Naive thymus-derived CD4-positive, alpha-beta T cell (primary cell): ENCODE measurements at regions of chr3 and their contacts with region 1.

Region 1: GRCh38 chr3:177359593-177360357 is 162.5 kb upstream of the TBL1XR1 start:
- DNase-seq: peak; percentile 95 to 98 (median 96)
- ATAC-seq: peak; percentile 92
- H3K4me3 ChIP-seq: peak overlapping the region; percentile 75
- H3K4me3 Mint-ChIP-seq: peak overlapping the region; percentile 77 to 98 (median 94)
- H3K27ac ChIP-seq: peak overlapping the region; percentile 90
- H3K27ac Mint-ChIP-seq: peak overlapping the region; percentile 96 to 100 (median 98)
- H3K4me1 ChIP-seq: peaks cover 31 to 34% of the 10 kb centered on the region in 2 donors
- H3K4me1 Mint-ChIP-seq: peaks cover 28 to 63% (median 54%) of the 10 kb centered on the region in 7 donors
- H3K27me3 ChIP-seq: no peaks in the 10 kb centered on the region
- H3K27me3 Mint-ChIP-seq: peaks cover 0 to 2% (median 0%) of the 10 kb centered on the region in 5 donors

Region 2: GRCh38 chr3:176321099-176321498 is 1038.7 kb before region 1 on chr3:
- CTCF ChIA-PET with region 1: no interaction called
- POLR2A ChIA-PET with region 1: no interaction called
- intact Hi-C with region 1: no loop called
- DNase-seq: no peak
- ATAC-seq: no peak
- H3K4me3 ChIP-seq: no peak overlapping the region
- H3K4me3 Mint-ChIP-seq: no peak overlapping the region
- H3K27ac ChIP-seq: no peak overlapping the region
- H3K27ac Mint-ChIP-seq: no peak overlapping the region
- H3K4me1 ChIP-seq: no peaks in the 10 kb centered on the region
- H3K4me1 Mint-ChIP-seq: peaks cover 0 to 2% (median 0%) of the 10 kb centered on the region in 7 donors
- H3K27me3 ChIP-seq: no peaks in the 10 kb centered on the region
- H3K27me3 Mint-ChIP-seq: no peaks in the 10 kb centered on the region

Region 3: DNA sequence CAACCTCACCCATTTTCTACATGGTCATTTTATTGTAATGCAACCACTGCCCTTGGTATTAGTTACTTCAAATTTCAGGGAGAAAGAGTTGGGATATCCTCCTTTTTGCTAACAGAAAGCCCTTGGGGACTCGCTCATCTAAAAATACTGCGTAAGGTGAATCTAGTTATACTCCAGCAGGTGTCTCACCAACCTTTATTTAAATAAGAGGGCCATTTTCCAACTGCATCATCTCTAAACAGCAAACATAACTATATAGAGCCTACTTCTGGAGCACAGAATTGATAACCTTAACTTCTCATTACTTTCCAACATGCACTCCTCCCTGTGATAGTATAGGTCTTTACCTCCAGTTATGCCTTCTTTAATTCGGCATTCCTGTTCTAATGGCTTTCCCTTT is 239.9 kb before region 1 on chr3:
- CTCF ChIA-PET with region 1: interaction called, 3 read pairs
- POLR2A ChIA-PET with region 1: interaction called, 6 read pairs
- intact Hi-C with region 1: loop called in 1 of 2 experiments (anchors 1 kb)
- DNase-seq: peak in 1 of 9 donors; percentile 31
- ATAC-seq: no peak
- H3K4me3 ChIP-seq: no peak overlapping the region
- H3K4me3 Mint-ChIP-seq: peak overlapping the region in 1 of 10 donors; percentile 28
- H3K27ac ChIP-seq: no peak overlapping the region
- H3K27ac Mint-ChIP-seq: peak overlapping the region in 6 of 9 donors; percentile 10 to 52 (median 26)
- H3K4me1 ChIP-seq: peaks cover 5 to 33% of the 10 kb centered on the region in 2 donors
- H3K4me1 Mint-ChIP-seq: peaks cover 46 to 97% (median 91%) of the 10 kb centered on the region in 7 donors
- H3K27me3 ChIP-seq: no peaks in the 10 kb centered on the region
- H3K27me3 Mint-ChIP-seq: no peaks in the 10 kb centered on the region

Region 4: DNA sequence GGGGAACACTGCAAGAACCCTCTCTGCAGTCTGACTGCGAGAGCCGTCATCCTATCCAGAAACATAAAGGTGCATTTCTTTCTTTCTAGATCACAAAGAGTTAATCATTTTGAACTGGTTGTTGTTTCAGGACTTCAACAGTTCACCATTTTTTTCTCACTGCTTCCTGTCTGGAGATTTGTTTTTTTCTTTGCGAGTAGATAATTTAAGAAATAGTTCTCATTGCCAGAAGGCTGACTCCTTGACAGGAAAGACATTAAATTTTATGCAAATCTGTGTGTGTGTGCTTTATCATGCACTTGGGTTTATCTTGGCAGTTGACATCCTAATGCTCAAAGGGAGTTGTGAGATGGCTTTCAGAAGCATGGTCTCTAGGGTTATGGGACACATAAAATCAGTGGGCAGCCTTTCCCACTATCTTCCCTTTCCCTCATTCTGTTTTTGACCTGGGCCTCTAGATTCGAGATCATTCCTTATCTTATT is 39.0 kb before region 1 on chr3:
- CTCF ChIA-PET with region 1: no interaction called
- POLR2A ChIA-PET with region 1: interaction called, 3 read pairs
- intact Hi-C with region 1: loop called (anchors 1 kb)
- DNase-seq: peak in 7 of 9 donors; percentile 18 to 61 (median 52)
- ATAC-seq: no peak
- H3K4me3 ChIP-seq: no peak overlapping the region
- H3K4me3 Mint-ChIP-seq: peak overlapping the region; percentile 4 to 75 (median 60)
- H3K27ac ChIP-seq: no peak overlapping the region
- H3K27ac Mint-ChIP-seq: peak overlapping the region; percentile 11 to 90 (median 74)
- H3K4me1 ChIP-seq: peaks cover 0 to 14% of the 10 kb centered on the region in 2 donors
- H3K4me1 Mint-ChIP-seq: peaks cover 17 to 47% (median 38%) of the 10 kb centered on the region in 7 donors
- H3K27me3 ChIP-seq: no peaks in the 10 kb centered on the region
- H3K27me3 Mint-ChIP-seq: no peaks in the 10 kb centered on the region

Region 5: GRCh38 chr3:177487635-177488186 is 127.9 kb after region 1 on chr3:
- CTCF ChIA-PET with region 1: no interaction called
- POLR2A ChIA-PET with region 1: no interaction called
- intact Hi-C with region 1: loop called in 1 of 2 experiments (anchors 5 kb)
- DNase-seq: no peak
- ATAC-seq: no peak
- H3K4me3 ChIP-seq: no peak overlapping the region
- H3K4me3 Mint-ChIP-seq: peak overlapping the region in 1 of 10 donors; percentile 24
- H3K27ac ChIP-seq: no peak overlapping the region
- H3K27ac Mint-ChIP-seq: no peak overlapping the region
- H3K4me1 ChIP-seq: peaks cover 0 to 12% of the 10 kb centered on the region in 2 donors
- H3K4me1 Mint-ChIP-seq: peaks cover 6 to 28% (median 22%) of the 10 kb centered on the region in 7 donors
- H3K27me3 ChIP-seq: no peaks in the 10 kb centered on the region
- H3K27me3 Mint-ChIP-seq: no peaks in the 10 kb centered on the region

Region 6: GRCh38 chr3:177665122-177665808 is 305.5 kb after region 1 on chr3:
- CTCF ChIA-PET with region 1: no interaction called
- POLR2A ChIA-PET with region 1: no interaction called
- intact Hi-C with region 1: loop called in 1 of 2 experiments (anchors 1 kb)
- DNase-seq: no peak
- ATAC-seq: no peak
- H3K4me3 ChIP-seq: no peak overlapping the region
- H3K4me3 Mint-ChIP-seq: no peak overlapping the region
- H3K27ac ChIP-seq: no peak overlapping the region
- H3K27ac Mint-ChIP-seq: peak overlapping the region in 1 of 9 donors; percentile 17
- H3K4me1 ChIP-seq: no peaks in the 10 kb centered on the region
- H3K4me1 Mint-ChIP-seq: peaks cover 0 to 5% (median 0%) of the 10 kb centered on the region in 7 donors
- H3K27me3 ChIP-seq: no peaks in the 10 kb centered on the region
- H3K27me3 Mint-ChIP-seq: no peaks in the 10 kb centered on the region

Region 7: GRCh38 chr3:178155521-178155920 is 795.7 kb after region 1 on chr3:
- CTCF ChIA-PET with region 1: no interaction called
- POLR2A ChIA-PET with region 1: no interaction called
- intact Hi-C with region 1: loop called in 1 of 2 experiments (anchors 1 kb)
- DNase-seq: no peak
- ATAC-seq: no peak
- H3K4me3 ChIP-seq: no peak overlapping the region
- H3K4me3 Mint-ChIP-seq: no peak overlapping the region
- H3K27ac ChIP-seq: no peak overlapping the region
- H3K27ac Mint-ChIP-seq: no peak overlapping the region
- H3K4me1 ChIP-seq: no peaks in the 10 kb centered on the region
- H3K4me1 Mint-ChIP-seq: peaks cover 0 to 11% (median 5%) of the 10 kb centered on the region in 7 donors
- H3K27me3 ChIP-seq: no peaks in the 10 kb centered on the region
- H3K27me3 Mint-ChIP-seq: peaks cover 0 to 3% (median 0%) of the 10 kb centered on the region in 5 donors